ENCODE measurements at regions of chr2 and their contacts with region 1.

Region 1: DNA sequence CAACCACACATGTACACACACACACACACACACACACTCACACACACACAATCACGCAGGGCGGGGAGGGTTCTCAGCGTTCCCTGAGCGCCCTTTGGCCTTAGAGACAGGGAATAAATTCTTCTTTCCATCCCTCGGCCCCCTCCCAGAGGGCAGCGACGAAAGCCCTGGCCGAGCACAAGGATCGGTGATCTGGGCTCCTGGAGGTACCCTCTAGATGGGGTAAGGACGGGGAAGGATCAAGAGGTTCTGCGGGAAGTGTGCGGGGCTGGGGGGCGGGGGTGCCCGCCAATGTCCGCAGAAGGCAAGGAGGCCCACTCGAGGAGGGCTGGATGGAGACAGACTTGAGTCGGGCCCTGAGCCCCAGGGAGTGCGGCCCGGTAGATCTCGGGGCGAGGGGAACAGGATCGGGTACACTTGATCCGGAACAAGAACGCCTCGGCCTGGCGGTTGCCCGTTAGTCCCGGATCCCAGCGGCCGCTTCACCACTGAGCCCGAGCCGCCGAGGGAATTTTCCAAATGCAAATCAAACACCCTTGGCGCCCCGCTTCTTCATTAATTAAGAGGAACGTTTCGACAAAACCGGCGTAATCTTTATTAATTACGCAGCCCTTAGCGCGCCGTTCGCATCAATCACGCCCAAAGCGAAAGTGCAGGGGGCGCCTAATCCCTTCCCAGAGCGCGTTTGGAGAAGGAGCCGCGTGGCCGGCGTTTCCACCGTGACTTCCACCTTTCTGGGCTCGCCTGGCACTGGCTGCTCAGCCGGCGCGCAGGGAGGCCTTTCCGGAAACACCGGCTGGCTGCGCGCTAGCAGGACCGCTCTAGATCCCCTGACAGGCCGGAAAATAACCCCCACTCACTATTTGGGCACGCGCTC is 7.0 kb upstream of the PAX3 start:
- DNase-seq: no peak
- ATAC-seq: peak; percentile 50
- H3K4me3 ChIP-seq: peak overlapping the region; percentile 32 to 57
- H3K27ac ChIP-seq: no peak overlapping the region
- H3K4me1 ChIP-seq: peaks cover 11% of the 10 kb centered on the region
- H3K27me3 ChIP-seq: peaks cover 53% of the 10 kb centered on the region
- CTCF ChIP-seq: no peak

Region 2: GRCh38 chr2:222064286-222064685 is 241.5 kb before region 1 on chr2:
- CTCF ChIA-PET with region 1: no interaction called
- POLR2A ChIA-PET with region 1: no interaction called
- in situ Hi-C with region 1: no loop called
- intact Hi-C with region 1: loop called (anchors 5 kb)
- DNase-seq: no peak
- ATAC-seq: no peak
- H3K4me3 ChIP-seq: no peak overlapping the region
- H3K27ac ChIP-seq: no peak overlapping the region
- H3K4me1 ChIP-seq: no peaks in the 10 kb centered on the region
- H3K27me3 ChIP-seq: no peaks in the 10 kb centered on the region
- CTCF ChIP-seq: no peak

Region 3: GRCh38 chr2:222332116-222332515 is 26.4 kb after region 1 on chr2:
- CTCF ChIA-PET with region 1: no interaction called
- POLR2A ChIA-PET with region 1: no interaction called
- in situ Hi-C with region 1: no loop called
- intact Hi-C with region 1: no loop called
- DNase-seq: no peak
- ATAC-seq: no peak
- H3K4me3 ChIP-seq: no peak overlapping the region
- H3K27ac ChIP-seq: no peak overlapping the region
- H3K4me1 ChIP-seq: no peaks in the 10 kb centered on the region
- H3K27me3 ChIP-seq: no peaks in the 10 kb centered on the region
- CTCF ChIP-seq: no peak

Measured in Panc1 (cell line).